T-cell (primary cell): ENCODE measurements at regions of chr3 and their contacts with region 1.

Region 1: GRCh38 chr3:27712136-27713077 is 9.7 kb downstream of the EOMES start:
- DNase-seq: peak; percentile 59 to 88 (median 74)
- ATAC-seq: peak; percentile 88 to 92 (median 92)
- H3K4me3 ChIP-seq: peak overlapping the region; percentile 69 to 100
- H3K4me3 Mint-ChIP-seq: peak overlapping the region; percentile 93 to 97 (median 93)
- H3K27ac ChIP-seq: peak overlapping the region; percentile 69
- H3K27ac Mint-ChIP-seq: peak overlapping the region; percentile 87 to 89
- H3K4me1 ChIP-seq: peaks cover 15 to 38% of the 10 kb centered on the region in 2 experiments
- H3K4me1 Mint-ChIP-seq: peaks cover 29 to 36% (median 35%) of the 10 kb centered on the region in 3 donors
- H3K27me3 ChIP-seq: peaks cover 23 to 37% of the 10 kb centered on the region in 2 experiments
- H3K27me3 Mint-ChIP-seq: peaks cover 36 to 43% of the 10 kb centered on the region in 2 donors

Region 2: GRCh38 chr3:27888562-27888961 is 176.2 kb after region 1 on chr3:
- CTCF ChIA-PET with region 1: interaction called, 3 to 13 read pairs
- POLR2A ChIA-PET with region 1: no interaction called
- DNase-seq: no peak
- ATAC-seq: no peak
- H3K4me3 ChIP-seq: no peak overlapping the region
- H3K4me3 Mint-ChIP-seq: no peak overlapping the region
- H3K27ac ChIP-seq: no peak overlapping the region
- H3K27ac Mint-ChIP-seq: no peak overlapping the region
- H3K4me1 ChIP-seq: no peaks in the 10 kb centered on the region
- H3K4me1 Mint-ChIP-seq: peaks cover 12 to 17% (median 15%) of the 10 kb centered on the region in 3 donors
- H3K27me3 ChIP-seq: peaks cover 0 to 3% of the 10 kb centered on the region in 2 experiments
- H3K27me3 Mint-ChIP-seq: peaks cover 0 to 1% of the 10 kb centered on the region in 2 donors

Region 3: DNA sequence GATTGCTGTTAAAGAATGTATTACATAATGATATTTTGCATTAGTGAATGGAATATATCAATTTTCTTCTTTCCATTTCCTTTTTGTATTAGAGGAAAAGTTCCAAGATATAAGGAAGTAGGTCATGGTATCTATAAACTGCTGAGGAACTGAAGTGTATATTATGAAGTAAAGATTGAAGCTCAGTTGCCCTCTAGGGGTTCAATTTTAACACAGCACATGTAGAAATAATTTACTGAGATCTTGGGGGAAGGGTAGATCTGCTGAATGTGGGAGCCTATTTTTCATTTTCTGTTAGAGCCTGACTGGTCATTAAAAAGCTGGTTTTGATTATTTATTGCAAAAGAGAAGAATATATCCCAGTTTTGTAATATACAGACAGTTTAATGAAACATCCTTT is 574.2 kb after region 1 on chr3:
- CTCF ChIA-PET with region 1: interaction called, 20 to 52 read pairs
- POLR2A ChIA-PET with region 1: no interaction called
- DNase-seq: peak in 1 of 35 experiments; percentile 62
- ATAC-seq: peak; percentile 50 to 84 (median 78)
- H3K4me3 ChIP-seq: no peak overlapping the region
- H3K4me3 Mint-ChIP-seq: no peak overlapping the region
- H3K27ac ChIP-seq: no peak overlapping the region
- H3K27ac Mint-ChIP-seq: no peak overlapping the region
- H3K4me1 ChIP-seq: no peaks in the 10 kb centered on the region
- H3K4me1 Mint-ChIP-seq: peaks cover 13 to 21% (median 18%) of the 10 kb centered on the region in 3 donors
- H3K27me3 ChIP-seq: no peaks in the 10 kb centered on the region
- H3K27me3 Mint-ChIP-seq: no peaks in the 10 kb centered on the region

Region 4: DNA sequence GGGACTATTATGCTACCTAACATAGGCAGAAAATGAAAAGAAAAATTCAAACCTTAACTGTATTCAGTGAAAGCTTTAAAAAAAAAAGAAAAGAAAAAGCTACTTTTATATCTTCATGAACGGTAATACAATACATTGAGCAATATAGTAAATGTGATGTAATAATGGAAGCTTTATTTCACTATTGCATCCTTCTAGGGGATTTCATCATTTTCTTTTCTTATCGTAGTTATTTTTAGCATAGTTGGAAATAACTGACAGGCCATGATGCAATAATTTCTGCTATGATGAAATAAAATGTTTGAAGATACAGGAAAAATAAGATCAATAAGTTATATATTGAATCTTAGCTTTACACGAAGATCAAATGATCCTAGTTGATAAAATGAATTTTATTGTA is 595.8 kb after region 1 on chr3:
- CTCF ChIA-PET with region 1: interaction called, 3 to 10 read pairs
- POLR2A ChIA-PET with region 1: no interaction called
- DNase-seq: no peak
- ATAC-seq: no peak
- H3K4me3 ChIP-seq: no peak overlapping the region
- H3K4me3 Mint-ChIP-seq: no peak overlapping the region
- H3K27ac ChIP-seq: no peak overlapping the region
- H3K27ac Mint-ChIP-seq: no peak overlapping the region
- H3K4me1 ChIP-seq: no peaks in the 10 kb centered on the region
- H3K4me1 Mint-ChIP-seq: peaks cover 9 to 20% (median 12%) of the 10 kb centered on the region in 3 donors
- H3K27me3 ChIP-seq: no peaks in the 10 kb centered on the region
- H3K27me3 Mint-ChIP-seq: no peaks in the 10 kb centered on the region

Region 5: DNA sequence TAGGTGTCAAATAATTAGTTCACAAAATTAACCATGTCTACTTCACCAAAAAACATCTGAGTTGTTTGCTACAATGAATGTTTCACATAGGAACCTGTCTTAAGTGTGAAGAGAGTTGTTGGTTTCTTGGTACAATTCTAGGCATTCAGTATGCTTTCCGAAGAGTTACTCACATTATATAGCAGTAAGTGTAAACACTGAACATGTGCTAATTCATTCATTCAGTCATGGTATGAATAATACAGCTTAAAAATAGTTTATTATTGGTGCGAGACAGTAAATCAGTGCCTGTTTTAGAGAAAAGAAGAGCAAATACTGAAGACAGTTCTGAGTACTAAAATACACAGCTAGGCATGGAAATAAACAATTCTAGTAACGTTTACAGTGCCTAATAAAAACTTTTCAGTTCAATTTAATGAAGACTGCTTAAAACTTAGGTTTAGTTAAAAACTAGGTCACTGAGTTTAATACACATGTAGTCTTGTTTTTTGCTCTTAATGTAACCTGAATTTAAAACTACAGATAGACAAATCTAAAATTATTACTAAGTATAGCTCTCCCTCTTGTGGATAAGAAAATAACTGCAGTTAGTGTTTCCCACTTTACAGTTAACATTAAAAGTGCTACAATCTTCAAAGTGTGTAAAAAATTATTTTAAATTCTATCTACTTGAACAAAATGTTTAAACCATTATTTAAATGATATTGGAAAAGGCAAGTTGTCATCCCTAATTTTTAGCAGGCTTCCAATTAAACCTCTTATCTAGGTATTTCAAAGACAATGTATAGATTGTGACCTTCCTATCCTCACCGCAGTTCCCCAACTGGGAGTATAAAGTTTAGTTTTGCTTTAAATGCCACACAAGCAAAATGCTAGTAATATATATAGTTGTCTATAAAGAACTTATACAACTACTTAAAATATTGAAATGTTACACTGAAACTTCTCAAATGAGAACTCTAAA is 616.1 kb after region 1 on chr3:
- CTCF ChIA-PET with region 1: interaction called, 62 to 207 read pairs
- POLR2A ChIA-PET with region 1: interaction called, 4 to 9 read pairs
- DNase-seq: peak in 1 of 35 experiments; percentile 72
- ATAC-seq: peak in 2 of 4 experiments; percentile 56 to 64
- H3K4me3 ChIP-seq: no peak overlapping the region
- H3K4me3 Mint-ChIP-seq: no peak overlapping the region
- H3K27ac ChIP-seq: no peak overlapping the region
- H3K27ac Mint-ChIP-seq: no peak overlapping the region
- H3K4me1 ChIP-seq: peaks cover 0 to 4% of the 10 kb centered on the region in 2 experiments
- H3K4me1 Mint-ChIP-seq: peaks cover 0 to 30% (median 23%) of the 10 kb centered on the region in 3 donors
- H3K27me3 ChIP-seq: no peaks in the 10 kb centered on the region
- H3K27me3 Mint-ChIP-seq: no peaks in the 10 kb centered on the region

Region 6: DNA sequence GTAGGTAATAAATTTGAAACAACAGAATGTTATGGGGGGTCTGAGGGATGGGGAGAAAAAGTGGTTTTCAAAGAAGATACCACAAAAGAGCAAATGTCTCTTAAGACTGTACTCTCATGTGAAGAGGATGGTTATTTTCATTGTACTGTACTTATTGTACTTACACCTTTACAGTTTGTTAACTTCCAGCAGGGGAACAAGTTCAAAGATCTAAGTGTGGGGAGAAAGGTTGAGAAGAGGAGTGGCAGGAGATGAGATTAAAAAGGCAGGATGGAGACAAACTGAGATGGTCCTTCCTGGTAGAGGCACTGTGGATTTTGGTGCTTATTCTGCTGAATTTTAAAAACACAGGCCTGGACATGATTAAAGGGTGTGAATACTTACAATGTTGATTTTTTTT is 630.7 kb after region 1 on chr3:
- CTCF ChIA-PET with region 1: interaction called, 6 to 19 read pairs
- POLR2A ChIA-PET with region 1: interaction called, 3 to 4 read pairs
- DNase-seq: no peak
- ATAC-seq: peak in 1 of 4 experiments; percentile 15
- H3K4me3 ChIP-seq: no peak overlapping the region
- H3K4me3 Mint-ChIP-seq: no peak overlapping the region
- H3K27ac ChIP-seq: no peak overlapping the region
- H3K27ac Mint-ChIP-seq: peak overlapping the region in 1 of 2 donors; percentile 2
- H3K4me1 ChIP-seq: peaks cover 5 to 13% of the 10 kb centered on the region in 2 experiments
- H3K4me1 Mint-ChIP-seq: peaks cover 50 to 56% (median 55%) of the 10 kb centered on the region in 3 donors
- H3K27me3 ChIP-seq: no peaks in the 10 kb centered on the region
- H3K27me3 Mint-ChIP-seq: no peaks in the 10 kb centered on the region